ENCODE measurements at regions of chr11 and their contacts with region 1.

Region 1: DNA sequence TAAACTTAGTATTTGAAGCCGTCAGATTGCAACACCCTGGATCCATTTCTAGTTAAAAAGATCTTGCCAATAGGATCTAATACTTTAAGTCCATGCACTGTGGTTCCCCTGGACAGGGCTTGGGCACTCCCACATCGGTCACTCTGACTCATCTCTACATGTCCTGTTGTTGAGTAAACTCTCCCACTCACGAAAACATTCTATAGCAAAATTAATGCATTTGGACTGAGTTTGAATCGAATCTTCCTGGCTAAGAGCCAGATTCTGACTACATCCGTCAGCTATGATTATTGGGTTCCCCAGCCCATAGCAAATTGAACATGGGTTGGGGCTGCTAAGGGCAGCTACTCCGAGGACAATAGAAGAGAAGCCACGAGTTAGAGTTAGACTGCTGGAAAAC is 182.1 kb upstream of the SORL1-AS1 start:
- DNase-seq: peak; percentile 79
- H3K4me3 ChIP-seq: no peak overlapping the region
- CTCF ChIP-seq: no peak

Region 2: GRCh38 chr11:121563900-121564822 is 70.7 kb before region 1 on chr11:
- in situ Hi-C with region 1: no loop called
- DNase-seq: no peak
- H3K4me3 ChIP-seq: no peak overlapping the region
- CTCF ChIP-seq: no peak

Region 3: DNA sequence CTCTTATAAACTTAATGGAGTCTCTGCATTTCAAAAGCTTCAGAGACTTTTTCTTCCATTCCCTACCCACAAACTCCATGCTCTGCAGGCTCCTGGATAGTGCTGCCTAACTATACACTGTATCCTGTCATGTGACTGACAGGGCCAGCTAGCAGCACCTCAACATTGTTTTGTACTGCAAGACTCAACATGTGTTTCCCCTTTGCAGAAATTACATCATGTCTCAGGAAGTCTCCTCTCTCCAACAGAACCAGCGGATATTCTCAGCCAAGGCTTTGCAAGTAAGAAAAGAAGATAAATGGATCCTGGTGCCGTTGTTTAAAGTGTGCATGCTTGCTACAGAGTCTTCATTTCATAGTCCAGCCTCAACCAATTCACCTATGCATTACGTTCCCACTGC is 856.6 kb after region 1 on chr11:
- in situ Hi-C with region 1: loop called (anchors 25 kb)
- DNase-seq: no peak
- H3K4me3 ChIP-seq: no peak overlapping the region
- CTCF ChIP-seq: no peak

Measured in astrocyte of the cerebellum (primary cell).